ENCODE measurements at regions of chr10 and their contacts with region 1.

Region 1: DNA sequence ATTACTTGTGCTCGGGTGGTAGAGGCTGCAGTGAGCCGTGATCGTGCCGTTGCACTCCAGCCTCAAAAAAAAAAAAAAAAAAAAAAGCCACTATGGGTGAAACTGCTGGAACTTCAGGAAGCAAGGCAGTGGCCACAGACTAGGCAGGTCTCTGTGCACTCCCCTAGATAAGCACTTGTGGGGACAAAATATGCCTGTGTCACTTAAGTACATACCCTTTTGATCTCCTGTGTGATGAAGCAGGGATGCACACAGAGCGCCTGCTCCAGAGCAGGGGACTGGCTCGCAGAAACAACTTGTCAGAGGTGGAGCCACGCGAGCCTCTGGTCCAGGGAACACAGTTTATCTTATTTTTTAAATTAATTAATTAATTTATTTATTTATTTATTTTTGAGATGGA is 42.9 kb upstream of the PSAP start:
- DNase-seq: no peak
- ATAC-seq: no peak
- H3K4me3 ChIP-seq: no peak overlapping the region
- H3K4me3 Mint-ChIP-seq: no peak overlapping the region
- H3K27ac ChIP-seq: no peak overlapping the region
- H3K27ac Mint-ChIP-seq: no peak overlapping the region
- H3K4me1 ChIP-seq: peaks cover 16 to 17% of the 10 kb centered on the region in 2 donors
- H3K4me1 Mint-ChIP-seq: peaks cover 20% of the 10 kb centered on the region
- H3K27me3 ChIP-seq: no peaks in the 10 kb centered on the region
- H3K27me3 Mint-ChIP-seq: no peaks in the 10 kb centered on the region
- CTCF ChIP-seq: no peak

Region 2: DNA sequence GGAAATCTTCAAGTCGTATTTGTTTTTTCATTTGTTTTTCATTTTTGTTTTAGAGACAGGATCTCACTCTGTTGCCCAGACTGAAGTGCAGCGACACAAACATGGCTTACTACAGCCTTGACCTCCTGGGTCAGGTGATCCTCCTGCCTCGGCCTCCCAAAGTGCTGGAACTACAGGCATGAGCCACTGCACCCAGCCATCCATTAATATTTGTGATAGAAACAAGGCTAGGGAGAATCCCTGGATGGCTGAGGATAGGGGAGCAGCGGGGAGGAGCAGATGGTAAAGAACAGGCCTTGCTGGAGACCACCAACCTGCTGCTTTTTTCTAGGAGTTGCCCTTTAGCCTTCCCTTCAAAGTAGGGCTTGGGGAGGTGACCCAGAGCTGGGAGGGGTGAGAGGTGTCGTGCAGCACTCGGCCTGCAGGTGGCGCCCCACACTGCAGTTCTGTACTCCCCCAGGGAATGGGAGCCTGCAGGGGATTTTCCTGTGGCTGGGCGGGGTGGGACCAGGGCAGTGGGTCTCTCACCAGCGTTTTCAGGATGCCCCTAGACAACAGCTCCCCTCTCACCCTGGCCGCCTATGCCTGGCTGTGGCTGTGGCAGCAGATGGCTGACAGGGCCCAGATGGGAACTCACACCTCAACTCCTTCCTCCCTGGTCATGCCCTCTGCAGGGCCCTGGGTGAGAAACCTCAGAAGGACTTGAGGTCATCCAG is 509.8 kb before region 1 on chr10:
- CTCF ChIA-PET with region 1: interaction called, 4 read pairs
- POLR2A ChIA-PET with region 1: no interaction called
- intact Hi-C with region 1: loop called (anchors 1 kb)
- DNase-seq: peak; percentile 79
- ATAC-seq: peak; percentile 99
- H3K4me3 ChIP-seq: no peak overlapping the region
- H3K4me3 Mint-ChIP-seq: no peak overlapping the region
- H3K27ac ChIP-seq: no peak overlapping the region
- H3K27ac Mint-ChIP-seq: no peak overlapping the region
- H3K4me1 ChIP-seq: peaks cover 2 to 7% of the 10 kb centered on the region in 2 donors
- H3K4me1 Mint-ChIP-seq: peaks cover 7% of the 10 kb centered on the region
- H3K27me3 ChIP-seq: peaks cover 0 to 7% (median 0%) of the 10 kb centered on the region in 4 experiments
- H3K27me3 Mint-ChIP-seq: peaks cover 7% of the 10 kb centered on the region
- CTCF ChIP-seq: peak; percentile 89

Region 3: DNA sequence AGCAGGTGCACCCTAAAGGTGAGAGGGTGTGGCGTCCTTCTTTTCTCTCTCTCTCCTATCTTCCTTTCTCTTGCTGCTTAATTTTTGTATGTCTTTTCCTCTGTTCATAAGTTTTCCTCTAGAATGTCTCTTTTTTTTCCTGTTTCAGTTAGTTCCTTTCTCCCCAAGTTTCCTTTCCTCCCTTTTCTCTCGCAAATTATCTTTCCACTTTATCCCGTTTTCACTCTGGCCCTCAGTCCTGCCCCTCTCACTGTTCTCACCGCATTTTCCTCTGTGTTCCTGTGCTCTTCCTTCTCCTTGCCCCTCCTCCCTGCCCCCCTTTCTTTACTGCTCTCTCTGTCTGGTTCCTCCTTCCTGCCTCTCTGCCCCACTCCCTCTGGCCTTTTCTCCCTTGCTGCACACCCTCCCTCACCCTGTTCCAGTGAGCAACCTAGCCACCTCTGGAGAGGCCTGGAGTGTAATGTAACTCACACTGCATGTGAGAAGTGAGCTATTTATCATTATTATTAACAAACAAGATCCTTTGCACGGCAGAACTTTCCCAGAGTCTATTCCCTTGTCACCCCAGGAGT is 332.8 kb before region 1 on chr10:
- CTCF ChIA-PET with region 1: no interaction called
- POLR2A ChIA-PET with region 1: no interaction called
- intact Hi-C with region 1: no loop called
- DNase-seq: no peak
- ATAC-seq: no peak
- H3K4me3 ChIP-seq: no peak overlapping the region
- H3K4me3 Mint-ChIP-seq: no peak overlapping the region
- H3K27ac ChIP-seq: no peak overlapping the region
- H3K27ac Mint-ChIP-seq: no peak overlapping the region
- H3K4me1 ChIP-seq: no peaks in the 10 kb centered on the region
- H3K4me1 Mint-ChIP-seq: no peaks in the 10 kb centered on the region
- H3K27me3 ChIP-seq: peaks cover 0 to 16% (median 0%) of the 10 kb centered on the region in 4 experiments
- H3K27me3 Mint-ChIP-seq: peaks cover 46% of the 10 kb centered on the region
- CTCF ChIP-seq: no peak

Region 4: DNA sequence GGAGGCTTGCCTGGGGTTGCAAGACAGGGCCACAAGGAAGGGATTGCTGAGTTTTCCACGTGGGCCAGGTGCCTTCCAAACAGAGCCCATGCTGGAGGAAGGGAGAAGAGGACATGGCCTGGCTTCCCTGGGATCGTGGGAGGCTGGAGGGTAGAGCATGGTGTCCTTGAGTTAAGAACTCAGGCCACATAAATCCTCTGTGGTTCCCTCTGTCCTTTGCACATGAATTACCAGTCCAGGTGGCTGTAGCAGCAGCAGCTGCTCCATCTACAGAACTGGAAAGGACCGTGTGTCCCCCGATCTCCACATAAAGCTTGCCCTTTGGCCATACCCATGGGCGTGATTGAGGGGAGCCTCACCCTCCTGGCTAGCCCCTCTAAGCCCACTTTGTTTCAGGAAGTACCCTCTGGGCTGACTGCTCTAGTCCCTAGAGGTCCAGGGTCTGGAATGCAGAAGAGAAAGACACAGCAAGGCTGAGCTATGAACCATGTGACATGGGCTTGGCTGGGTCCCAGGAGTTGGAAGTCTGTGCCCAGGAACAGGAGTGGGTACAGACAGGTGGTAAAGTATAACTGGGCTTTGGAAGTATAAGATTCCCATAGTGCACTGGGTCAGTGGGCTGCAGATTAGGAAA is 259.3 kb before region 1 on chr10:
- CTCF ChIA-PET with region 1: no interaction called
- POLR2A ChIA-PET with region 1: no interaction called
- intact Hi-C with region 1: no loop called
- DNase-seq: no peak
- ATAC-seq: no peak
- H3K4me3 ChIP-seq: no peak overlapping the region
- H3K4me3 Mint-ChIP-seq: no peak overlapping the region
- H3K27ac ChIP-seq: no peak overlapping the region
- H3K27ac Mint-ChIP-seq: no peak overlapping the region
- H3K4me1 ChIP-seq: peaks cover 7 to 11% of the 10 kb centered on the region in 2 donors
- H3K4me1 Mint-ChIP-seq: peaks cover 7% of the 10 kb centered on the region
- H3K27me3 ChIP-seq: no peaks in the 10 kb centered on the region
- H3K27me3 Mint-ChIP-seq: peaks cover 22% of the 10 kb centered on the region
- CTCF ChIP-seq: no peak

Region 5: GRCh38 chr10:71771821-71772617 is 121.9 kb before region 1 on chr10:
- CTCF ChIA-PET with region 1: interaction called, 21 read pairs
- POLR2A ChIA-PET with region 1: no interaction called
- intact Hi-C with region 1: loop called (anchors 2 kb)
- DNase-seq: peak; percentile 27
- ATAC-seq: no peak
- H3K4me3 ChIP-seq: peak overlapping the region; percentile 82 to 97 (median 90)
- H3K4me3 Mint-ChIP-seq: peak overlapping the region; percentile 94
- H3K27ac ChIP-seq: peak overlapping the region; percentile 88 to 95
- H3K27ac Mint-ChIP-seq: peak overlapping the region; percentile 92
- H3K4me1 ChIP-seq: peaks cover 90 to 98% of the 10 kb centered on the region in 2 donors
- H3K4me1 Mint-ChIP-seq: peaks cover 93% of the 10 kb centered on the region
- H3K27me3 ChIP-seq: no peaks in the 10 kb centered on the region
- H3K27me3 Mint-ChIP-seq: no peaks in the 10 kb centered on the region
- CTCF ChIP-seq: no peak

Region 6: DNA sequence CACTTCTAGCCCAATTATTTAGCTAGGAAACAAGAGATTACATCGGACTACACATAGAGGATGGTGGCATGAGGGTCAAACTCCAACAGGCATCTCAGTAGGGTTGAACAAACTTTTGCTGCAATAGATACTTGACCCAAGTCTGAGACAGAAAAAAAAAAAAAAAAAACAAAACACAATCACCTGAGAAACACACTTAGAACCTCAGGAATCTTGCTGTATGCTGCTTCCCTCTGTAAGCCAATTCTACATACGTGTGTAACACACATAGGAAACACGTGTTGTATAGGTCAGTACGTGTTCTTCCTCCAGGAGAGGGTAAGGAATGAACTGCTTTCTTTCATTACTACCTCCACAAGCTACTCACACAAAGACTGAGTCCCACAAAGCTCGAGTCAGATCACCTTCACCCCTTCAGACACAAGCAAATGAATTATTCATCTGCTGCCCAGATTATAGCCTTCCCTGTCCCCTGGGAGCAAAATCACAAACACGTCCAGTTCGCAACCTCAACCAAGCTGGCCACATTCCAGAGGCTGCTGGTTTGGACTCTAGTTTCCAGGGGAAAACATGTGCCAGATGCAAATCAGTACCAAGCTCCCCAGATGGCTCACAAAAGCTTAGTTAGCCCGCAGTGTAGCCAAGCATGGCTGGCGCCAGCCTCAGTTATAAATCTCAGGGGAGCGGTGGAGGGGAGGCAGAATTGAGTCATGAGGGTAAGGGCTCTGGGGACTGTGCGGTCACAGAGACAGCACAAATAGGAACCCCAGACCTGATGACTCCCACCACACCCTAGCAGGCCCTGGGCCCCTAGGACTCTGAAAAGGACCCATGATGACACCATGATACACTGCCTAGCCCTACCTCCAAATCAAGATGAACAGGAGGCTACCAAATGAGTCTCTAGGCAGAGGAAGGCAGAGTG is 58.0 kb before region 1 on chr10:
- CTCF ChIA-PET with region 1: interaction called, 236 read pairs
- POLR2A ChIA-PET with region 1: interaction called, 8 read pairs
- intact Hi-C with region 1: loop called (anchors 1 kb)
- DNase-seq: peak; percentile 95
- ATAC-seq: peak; percentile 92
- H3K4me3 ChIP-seq: peak overlapping the region; percentile 7 to 49 (median 30)
- H3K4me3 Mint-ChIP-seq: peak overlapping the region; percentile 88
- H3K27ac ChIP-seq: peak overlapping the region; percentile 91 to 94
- H3K27ac Mint-ChIP-seq: peak overlapping the region; percentile 97
- H3K4me1 ChIP-seq: peaks cover 74 to 91% of the 10 kb centered on the region in 2 donors
- H3K4me1 Mint-ChIP-seq: peaks cover 79% of the 10 kb centered on the region
- H3K27me3 ChIP-seq: no peaks in the 10 kb centered on the region
- H3K27me3 Mint-ChIP-seq: no peaks in the 10 kb centered on the region
- CTCF ChIP-seq: no peak

Region 7: DNA sequence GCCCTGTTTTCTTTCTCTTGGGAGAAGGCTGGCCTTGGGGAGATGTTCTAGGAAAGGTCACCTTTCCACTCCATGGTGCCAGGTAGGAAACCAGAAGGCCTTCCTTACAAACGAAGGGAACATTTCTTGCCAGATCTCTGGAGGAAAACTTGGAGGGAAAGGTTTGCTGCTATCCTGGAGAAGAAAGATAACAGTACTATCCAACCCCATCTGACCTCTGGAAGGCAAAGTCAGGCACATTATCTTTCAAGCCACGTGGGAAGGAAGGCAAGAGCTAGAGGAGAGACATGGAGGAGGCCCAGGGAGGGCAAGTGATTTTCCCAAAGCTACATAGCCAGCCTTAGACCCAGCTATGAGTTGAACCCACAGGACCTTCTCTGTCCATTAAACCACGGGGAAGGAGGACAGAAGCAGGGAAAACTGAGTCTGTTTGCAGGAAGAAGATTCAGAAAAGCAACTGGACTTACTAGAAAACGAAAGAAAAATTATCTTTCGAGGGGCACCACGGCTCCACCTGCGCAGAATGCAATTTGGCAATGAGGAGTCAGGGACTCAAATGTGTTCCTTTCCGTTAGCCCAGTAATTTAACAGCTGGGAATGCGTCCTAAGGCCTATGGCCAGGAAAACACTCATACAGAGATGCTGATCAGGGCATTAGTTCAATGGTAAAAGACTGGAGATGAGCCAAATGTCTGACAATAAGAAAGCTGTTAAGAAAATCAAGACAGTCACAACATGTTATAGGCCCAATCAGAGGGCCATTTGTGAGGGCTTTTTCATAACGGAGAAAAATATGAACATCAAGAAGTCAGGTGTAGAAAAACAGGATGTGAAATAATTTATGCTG is 10.9 kb before region 1 on chr10:
- CTCF ChIA-PET with region 1: interaction called, 22 read pairs
- POLR2A ChIA-PET with region 1: interaction called, 6 read pairs
- intact Hi-C with region 1: loop called (anchors 1 kb)
- DNase-seq: peak; percentile 37
- ATAC-seq: no peak
- H3K4me3 ChIP-seq: peak overlapping the region in 1 of 5 experiments; percentile 8
- H3K4me3 Mint-ChIP-seq: peak overlapping the region; percentile 69
- H3K27ac ChIP-seq: no peak overlapping the region
- H3K27ac Mint-ChIP-seq: peak overlapping the region; percentile 85
- H3K4me1 ChIP-seq: peaks cover 29 to 42% of the 10 kb centered on the region in 2 donors
- H3K4me1 Mint-ChIP-seq: peaks cover 44% of the 10 kb centered on the region
- H3K27me3 ChIP-seq: no peaks in the 10 kb centered on the region
- H3K27me3 Mint-ChIP-seq: no peaks in the 10 kb centered on the region
- CTCF ChIP-seq: no peak

Region 8: DNA sequence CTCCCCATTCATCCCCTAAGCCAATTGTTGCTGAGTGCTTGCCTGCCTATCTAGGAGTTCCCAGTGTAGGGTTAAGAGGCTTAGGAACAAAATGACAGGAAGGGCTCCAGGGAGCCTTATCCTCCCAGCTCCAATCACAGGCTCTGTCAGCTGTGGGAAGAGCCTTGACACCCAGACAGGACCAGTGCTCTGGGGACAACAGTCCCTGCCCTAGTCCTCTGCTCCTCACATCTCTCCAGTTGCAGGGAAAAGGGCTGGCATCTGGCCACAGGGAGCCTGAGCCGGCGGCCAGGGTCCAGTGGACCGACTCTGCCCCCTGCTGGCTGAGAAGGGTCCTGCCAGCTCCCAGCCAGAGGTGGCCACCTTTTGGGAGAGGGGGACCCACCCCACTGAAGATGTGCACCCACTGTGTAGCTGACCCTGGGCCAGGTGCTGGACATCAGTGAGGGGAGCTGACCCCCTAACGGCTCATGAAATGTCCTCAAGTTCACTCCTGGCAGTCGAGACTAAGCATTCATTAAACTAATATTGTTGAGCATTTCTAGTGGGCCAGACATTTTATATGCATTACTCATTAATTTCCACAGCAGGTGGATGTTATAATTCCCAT is 443.2 kb after region 1 on chr10:
- CTCF ChIA-PET with region 1: interaction called, 41 read pairs
- POLR2A ChIA-PET with region 1: interaction called, 3 read pairs
- intact Hi-C with region 1: loop called (anchors 2 kb)
- DNase-seq: peak; percentile 78
- ATAC-seq: no peak
- H3K4me3 ChIP-seq: no peak overlapping the region
- H3K4me3 Mint-ChIP-seq: no peak overlapping the region
- H3K27ac ChIP-seq: no peak overlapping the region
- H3K27ac Mint-ChIP-seq: peak overlapping the region; percentile 27
- H3K4me1 ChIP-seq: peaks cover 51 to 61% of the 10 kb centered on the region in 2 donors
- H3K4me1 Mint-ChIP-seq: peaks cover 60% of the 10 kb centered on the region
- H3K27me3 ChIP-seq: no peaks in the 10 kb centered on the region
- H3K27me3 Mint-ChIP-seq: no peaks in the 10 kb centered on the region
- CTCF ChIP-seq: peak; percentile 98

Measured in B cell (primary cell).